B cell (primary cell): ENCODE measurements at regions of chr17 and their contacts with region 1.

Region 1: GRCh38 chr17:78759203-78759968 is 22.7 kb downstream of the CYTH1 start:
- DNase-seq: peak; percentile 90
- ATAC-seq: peak; percentile 74
- H3K4me3 ChIP-seq: peak overlapping the region; percentile 13 to 47 (median 45)
- H3K4me3 Mint-ChIP-seq: peak overlapping the region; percentile 80
- H3K27ac ChIP-seq: peak overlapping the region; percentile 96 to 98
- H3K27ac Mint-ChIP-seq: peak overlapping the region; percentile 95
- H3K4me1 ChIP-seq: peaks cover 62 to 81% of the 10 kb centered on the region in 2 donors
- H3K4me1 Mint-ChIP-seq: peaks cover 73% of the 10 kb centered on the region
- H3K27me3 ChIP-seq: no peaks in the 10 kb centered on the region
- H3K27me3 Mint-ChIP-seq: no peaks in the 10 kb centered on the region
- CTCF ChIP-seq: no peak

Region 2: DNA sequence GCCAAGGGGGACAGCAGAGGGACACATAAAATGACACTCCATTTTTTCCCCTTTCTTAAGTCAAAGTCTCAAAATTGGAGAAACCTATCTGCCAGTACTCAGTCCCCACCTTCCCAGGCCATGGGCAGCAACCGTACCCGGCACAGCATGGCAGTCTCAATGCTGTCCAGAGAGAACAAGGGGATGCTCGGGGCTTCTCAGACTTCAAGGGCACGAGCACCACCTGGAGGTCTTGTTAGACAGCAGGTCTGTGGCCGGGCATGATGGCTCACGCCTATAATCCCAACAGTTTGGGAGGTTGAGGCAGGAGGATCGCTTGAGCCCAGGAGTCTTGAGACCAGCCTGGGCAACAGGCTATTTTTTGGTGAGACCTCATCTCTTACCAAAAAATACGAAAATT is 185.4 kb before region 1 on chr17:
- CTCF ChIA-PET with region 1: no interaction called
- POLR2A ChIA-PET with region 1: no interaction called
- intact Hi-C with region 1: no loop called
- DNase-seq: no peak
- ATAC-seq: no peak
- H3K4me3 ChIP-seq: no peak overlapping the region
- H3K4me3 Mint-ChIP-seq: no peak overlapping the region
- H3K27ac ChIP-seq: no peak overlapping the region
- H3K27ac Mint-ChIP-seq: no peak overlapping the region
- H3K4me1 ChIP-seq: peaks cover 0 to 16% of the 10 kb centered on the region in 2 donors
- H3K4me1 Mint-ChIP-seq: peaks cover 8% of the 10 kb centered on the region
- H3K27me3 ChIP-seq: no peaks in the 10 kb centered on the region
- H3K27me3 Mint-ChIP-seq: peaks cover 6% of the 10 kb centered on the region
- CTCF ChIP-seq: no peak

Region 3: DNA sequence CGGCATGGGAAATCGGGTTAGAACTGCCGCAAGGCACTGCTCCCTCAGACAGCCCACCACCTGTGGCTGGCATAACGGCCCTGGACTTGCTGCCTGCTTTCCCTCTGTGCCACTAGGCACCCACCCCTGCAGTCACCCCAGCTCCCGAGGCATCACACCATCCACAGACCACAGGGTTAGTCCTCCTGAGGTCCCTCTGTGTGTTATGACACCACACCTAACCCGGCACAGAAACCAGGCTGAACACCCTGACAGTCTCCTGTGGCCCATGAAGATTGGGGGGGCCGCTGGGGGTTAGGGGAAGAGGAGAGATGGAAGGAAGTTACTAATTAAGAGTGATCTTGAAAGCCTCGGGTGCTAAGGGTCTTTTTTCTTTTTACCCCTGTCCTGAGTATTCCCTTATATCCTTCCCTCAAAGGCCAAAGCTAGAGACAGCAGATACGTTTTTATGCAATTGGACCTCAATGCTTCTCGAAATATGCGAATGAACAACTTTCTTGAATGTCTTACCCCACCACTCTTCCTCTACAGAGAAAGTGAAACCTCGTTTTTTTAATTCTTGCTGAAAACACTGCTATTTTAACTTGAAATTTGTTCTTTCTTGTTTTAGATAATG is 15.7 kb after region 1 on chr17:
- CTCF ChIA-PET with region 1: interaction called, 46 read pairs
- POLR2A ChIA-PET with region 1: interaction called, 11 read pairs
- intact Hi-C with region 1: loop called (anchors 1 kb)
- DNase-seq: peak; percentile 73
- ATAC-seq: peak; percentile 52
- H3K4me3 ChIP-seq: peak overlapping the region; percentile 33 to 76 (median 51)
- H3K4me3 Mint-ChIP-seq: peak overlapping the region; percentile 92
- H3K27ac ChIP-seq: peak overlapping the region; percentile 82 to 90
- H3K27ac Mint-ChIP-seq: peak overlapping the region; percentile 99
- H3K4me1 ChIP-seq: peaks cover 79 to 90% of the 10 kb centered on the region in 2 donors
- H3K4me1 Mint-ChIP-seq: peaks cover 68% of the 10 kb centered on the region
- H3K27me3 ChIP-seq: no peaks in the 10 kb centered on the region
- H3K27me3 Mint-ChIP-seq: no peaks in the 10 kb centered on the region
- CTCF ChIP-seq: no peak

Region 4: GRCh38 chr17:78781948-78782916 is 22.8 kb after region 1 on chr17 and contains the start of gene CYTH1:
- CTCF ChIA-PET with region 1: interaction called, 5 read pairs
- POLR2A ChIA-PET with region 1: interaction called, 6 read pairs
- intact Hi-C with region 1: loop called (anchors 1 kb)
- DNase-seq: peak; percentile 96
- ATAC-seq: peak; percentile 83
- H3K4me3 ChIP-seq: peak within 1 kb of the TSS; percentile 78 to 95 (median 89)
- H3K4me3 Mint-ChIP-seq: peak within 1 kb of the TSS; percentile 88
- H3K27ac ChIP-seq: peak within 1 kb of the TSS; percentile 86 to 88
- H3K27ac Mint-ChIP-seq: peak within 1 kb of the TSS; percentile 96
- H3K4me1 ChIP-seq: peaks cover 33 to 44% of the 10 kb centered on the region in 2 donors
- H3K4me1 Mint-ChIP-seq: peaks cover 36% of the 10 kb centered on the region
- H3K27me3 ChIP-seq: no peaks in the 10 kb centered on the region
- H3K27me3 Mint-ChIP-seq: no peaks in the 10 kb centered on the region
- CTCF ChIP-seq: no peak
- total RNA-seq, gene CYTH1: 353 and 368 TPM in 2 replicates